Endothelial cell of umbilical vein (primary cell): ENCODE measurements at regions of chr3 and their contacts with region 1.

Region 1: DNA sequence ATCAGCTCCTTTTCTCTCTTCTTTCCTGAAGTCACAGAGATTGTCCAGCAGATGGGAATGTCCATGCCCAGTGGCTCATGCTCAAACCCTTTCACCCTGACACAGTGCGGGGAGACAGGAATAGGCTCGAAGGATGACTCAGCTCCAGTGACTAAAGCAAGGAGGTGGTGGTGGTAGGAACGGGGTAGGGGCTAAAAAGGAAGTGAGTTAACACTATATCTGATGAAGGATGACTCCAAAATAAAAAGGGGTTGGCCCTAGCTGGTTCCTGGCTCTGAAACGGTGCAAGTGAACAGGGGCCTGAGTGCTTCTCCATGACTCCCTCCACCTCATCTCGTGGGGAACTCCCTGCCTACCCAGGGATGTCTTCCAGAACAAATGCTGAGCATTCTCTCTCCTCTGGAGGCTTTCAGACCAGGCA is 167.4 kb upstream of the LPP start:
- DNase-seq: peak; percentile 84
- H3K4me3 ChIP-seq: no peak overlapping the region
- H3K27ac ChIP-seq: peak overlapping the region; percentile 11
- H3K4me1 ChIP-seq: peaks cover 15% of the 10 kb centered on the region
- H3K27me3 ChIP-seq: no peaks in the 10 kb centered on the region
- CTCF ChIP-seq: no peak
- POLR2A ChIP-seq: no peak

Region 2: DNA sequence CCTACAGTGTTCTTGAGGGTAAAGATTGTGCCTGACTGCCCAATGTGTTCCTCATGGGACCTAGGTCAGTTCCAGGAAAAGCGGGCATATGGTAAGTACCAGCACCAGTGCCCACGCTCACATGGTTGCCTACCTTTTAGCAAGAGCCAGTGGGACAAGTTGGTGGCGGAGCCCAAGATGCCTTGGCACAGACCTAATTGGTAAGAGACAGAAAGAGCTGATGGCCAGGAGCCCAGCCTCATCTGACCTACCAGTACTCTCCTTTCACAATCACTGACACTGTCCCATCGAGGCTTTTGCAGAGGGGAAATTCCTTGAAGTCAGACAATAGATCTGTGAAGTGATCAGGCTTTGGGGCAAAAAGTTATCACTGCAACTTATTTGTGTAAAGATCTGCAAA is 142.9 kb before region 1 on chr3:
- CTCF ChIA-PET with region 1: no interaction called
- POLR2A ChIA-PET with region 1: interaction called, 17 read pairs
- dilution Hi-C with region 1: no loop called
- intact Hi-C with region 1: no loop called
- DNase-seq: no peak
- H3K4me3 ChIP-seq: no peak overlapping the region
- H3K27ac ChIP-seq: no peak overlapping the region
- H3K4me1 ChIP-seq: no peaks in the 10 kb centered on the region
- H3K27me3 ChIP-seq: peaks cover 2 to 11% of the 10 kb centered on the region in 2 experiments
- CTCF ChIP-seq: no peak
- POLR2A ChIP-seq: no peak

Region 3: GRCh38 chr3:187889601-187890404 is 96.7 kb before region 1 on chr3:
- CTCF ChIA-PET with region 1: no interaction called
- POLR2A ChIA-PET with region 1: no interaction called
- dilution Hi-C with region 1: no loop called
- intact Hi-C with region 1: no loop called
- DNase-seq: no peak
- H3K4me3 ChIP-seq: no peak overlapping the region
- H3K27ac ChIP-seq: no peak overlapping the region
- H3K4me1 ChIP-seq: no peaks in the 10 kb centered on the region
- H3K27me3 ChIP-seq: no peaks in the 10 kb centered on the region
- CTCF ChIP-seq: no peak
- POLR2A ChIP-seq: no peak

Region 4: GRCh38 chr3:188021502-188022040 is 35.0 kb after region 1 on chr3:
- CTCF ChIA-PET with region 1: no interaction called
- POLR2A ChIA-PET with region 1: no interaction called
- dilution Hi-C with region 1: no loop called
- intact Hi-C with region 1: no loop called
- DNase-seq: peak; percentile 56
- H3K4me3 ChIP-seq: no peak overlapping the region
- H3K27ac ChIP-seq: no peak overlapping the region
- H3K4me1 ChIP-seq: peaks cover 8% of the 10 kb centered on the region
- H3K27me3 ChIP-seq: peaks cover 0 to 7% of the 10 kb centered on the region in 2 experiments
- CTCF ChIP-seq: no peak
- POLR2A ChIP-seq: no peak

Region 5: DNA sequence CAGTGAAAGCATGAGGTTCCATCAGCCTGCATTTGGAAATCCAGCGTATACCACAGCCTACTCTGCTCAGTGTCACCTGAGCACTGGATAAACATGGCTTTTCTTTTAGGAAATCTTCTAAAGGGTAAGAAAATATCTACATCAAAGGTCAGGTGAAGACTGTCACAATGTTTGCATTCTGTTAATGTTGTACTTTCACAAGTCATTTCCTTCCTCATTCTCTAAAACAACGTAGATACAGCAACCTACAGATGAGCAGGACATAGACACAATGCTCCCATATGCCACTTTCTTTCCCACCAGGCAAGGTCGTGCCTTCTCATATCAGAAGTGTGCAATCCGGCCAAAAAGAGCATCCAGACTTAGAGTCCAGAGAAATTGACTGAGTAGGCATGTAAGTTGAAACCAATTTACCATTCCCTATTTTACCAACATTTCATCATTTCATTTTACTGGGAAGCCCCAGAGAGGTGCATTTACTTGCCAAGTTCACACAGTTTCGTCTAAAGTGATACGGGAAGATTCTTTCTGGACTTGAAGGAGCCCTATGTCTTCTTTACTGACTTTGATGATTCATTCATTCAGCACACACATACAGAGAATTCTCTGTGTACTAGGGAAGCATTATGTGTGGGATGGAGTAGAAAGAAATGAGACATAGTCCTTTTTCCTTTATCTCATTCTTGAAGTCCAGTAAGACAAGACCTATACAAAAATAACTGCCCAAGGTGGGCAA is 136.8 kb after region 1 on chr3:
- CTCF ChIA-PET with region 1: no interaction called
- POLR2A ChIA-PET with region 1: no interaction called
- dilution Hi-C with region 1: no loop called
- intact Hi-C with region 1: no loop called
- DNase-seq: no peak
- H3K4me3 ChIP-seq: no peak overlapping the region
- H3K27ac ChIP-seq: no peak overlapping the region
- H3K4me1 ChIP-seq: no peaks in the 10 kb centered on the region
- H3K27me3 ChIP-seq: peaks cover 2 to 4% of the 10 kb centered on the region in 2 experiments
- CTCF ChIP-seq: no peak
- POLR2A ChIP-seq: no peak